ENCODE measurements at regions of chr6 and their contacts with region 1.

Region 1: DNA sequence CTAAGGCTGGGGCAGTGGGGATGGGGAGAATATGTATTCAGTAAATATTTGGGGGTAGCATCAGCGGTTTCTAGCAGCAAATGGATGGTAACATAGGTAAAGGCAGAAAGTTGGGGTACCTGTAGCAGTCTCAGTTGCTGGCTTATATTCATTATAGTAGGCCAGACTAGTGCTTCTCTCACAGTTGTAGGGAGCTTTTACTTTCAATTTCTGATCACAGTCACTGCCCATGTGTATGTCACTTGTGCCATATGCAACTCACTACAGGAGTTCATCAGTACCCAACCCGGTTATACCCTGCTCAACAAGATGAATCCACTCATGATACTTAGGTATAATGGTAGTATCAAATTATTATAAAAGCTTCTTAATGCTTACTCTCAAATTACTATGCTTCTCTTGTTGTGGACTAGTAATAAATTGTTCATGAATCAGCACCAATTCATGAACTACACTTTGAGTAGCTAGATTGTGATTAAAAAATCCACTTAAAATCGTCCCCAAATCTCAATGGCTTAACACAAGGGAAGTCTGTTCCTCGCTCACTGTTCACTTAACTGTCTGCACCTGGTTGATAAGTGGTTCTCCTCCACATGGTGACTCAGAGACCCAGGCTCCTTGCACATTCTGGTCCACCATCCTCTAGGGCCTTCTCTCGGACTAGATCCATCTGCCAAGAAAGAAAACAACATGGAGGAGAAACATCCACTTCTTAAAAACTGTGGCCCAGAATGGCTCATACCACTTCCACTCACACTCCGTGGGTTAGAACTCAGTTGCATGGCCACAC is 31.3 kb upstream of the MYLIP start:
- DNase-seq: peak; percentile 32
- ATAC-seq: peak; percentile 92
- H3K4me3 ChIP-seq: no peak overlapping the region
- H3K27ac ChIP-seq: no peak overlapping the region
- H3K4me1 ChIP-seq: peaks cover 4% of the 10 kb centered on the region; the same call in 1 of the 2 replicates
- H3K27me3 ChIP-seq: no peaks in the 10 kb centered on the region
- CTCF ChIP-seq: no peak
- EP300 ChIP-seq: no peak
- POLR2A ChIP-seq: no peak
- RAD21 ChIP-seq: no peak

Region 2: DNA sequence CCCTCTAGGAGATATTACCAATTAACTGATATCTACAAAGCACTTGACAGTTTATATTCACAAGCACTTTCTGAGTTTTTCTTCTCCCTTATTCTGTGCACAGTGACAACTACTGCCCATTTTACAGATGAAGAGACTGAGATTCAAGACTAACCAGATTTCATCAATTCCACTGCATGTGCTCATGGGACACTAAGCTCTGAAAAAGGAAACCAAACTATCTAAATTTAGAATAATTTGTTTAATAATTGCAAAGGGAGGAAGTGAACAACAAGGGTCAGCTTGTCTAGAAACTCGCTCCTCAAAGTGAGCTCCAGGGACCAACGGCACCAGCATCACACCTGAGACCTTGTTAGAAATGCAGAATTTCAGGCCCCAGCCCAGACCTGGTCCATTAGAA is 19.5 kb before region 1 on chr6:
- CTCF ChIA-PET with region 1: interaction called, 5 read pairs
- POLR2A ChIA-PET with region 1: interaction called, 4 read pairs
- RAD21 ChIA-PET with region 1: interaction called, 7 read pairs
- SMC1A ChIA-PET with region 1: interaction called, 14 read pairs
- in situ Hi-C with region 1: no loop called
- intact Hi-C with region 1: no loop called
- DNase-seq: peak; percentile 44
- ATAC-seq: peak; percentile 87
- H3K4me3 ChIP-seq: no peak overlapping the region
- H3K27ac ChIP-seq: no peak overlapping the region
- H3K4me1 ChIP-seq: peaks cover 12% of the 10 kb centered on the region
- H3K27me3 ChIP-seq: no peaks in the 10 kb centered on the region
- CTCF ChIP-seq: no peak
- EP300 ChIP-seq: no peak
- POLR2A ChIP-seq: no peak
- RAD21 ChIP-seq: 0 out of 2 replicates have a peak, but pooled peaks have one; percentile 1

Region 3: GRCh38 chr6:16174368-16175078 is 76.9 kb after region 1 on chr6:
- CTCF ChIA-PET with region 1: no interaction called
- POLR2A ChIA-PET with region 1: no interaction called
- RAD21 ChIA-PET with region 1: no interaction called
- SMC1A ChIA-PET with region 1: no interaction called
- in situ Hi-C with region 1: no loop called
- intact Hi-C with region 1: no loop called
- DNase-seq: no peak
- ATAC-seq: no peak
- H3K4me3 ChIP-seq: no peak overlapping the region
- H3K27ac ChIP-seq: no peak overlapping the region
- H3K4me1 ChIP-seq: no peaks in the 10 kb centered on the region
- H3K27me3 ChIP-seq: no peaks in the 10 kb centered on the region
- CTCF ChIP-seq: no peak
- EP300 ChIP-seq: no peak
- POLR2A ChIP-seq: no peak
- RAD21 ChIP-seq: no peak

Measured in GM12878 (cell line).